Activated naive CD4-positive, alpha-beta T cell treated with anti-CD3 and anti-CD28 coated beads for 36 hours (primary cell): ENCODE measurements at regions of chr12 and their contacts with region 1.

Region 1: GRCh38 chr12:49644620-49644994 is 21.2 kb downstream of the PRPF40B start:
- DNase-seq: peak; percentile 90
- H3K4me3 Mint-ChIP-seq: no peak overlapping the region
- H3K27ac Mint-ChIP-seq: peak overlapping the region; percentile 71
- H3K4me1 Mint-ChIP-seq: peaks cover 29% of the 10 kb centered on the region
- H3K27me3 Mint-ChIP-seq: no peaks in the 10 kb centered on the region

Region 2: GRCh38 chr12:49655595-49656236 is 11.1 kb after region 1 on chr12:
- CTCF ChIA-PET with region 1: interaction called, 23 read pairs
- intact Hi-C with region 1: no loop called
- DNase-seq: no peak
- H3K4me3 Mint-ChIP-seq: no peak overlapping the region
- H3K27ac Mint-ChIP-seq: no peak overlapping the region
- H3K4me1 Mint-ChIP-seq: peaks cover 33% of the 10 kb centered on the region
- H3K27me3 Mint-ChIP-seq: no peaks in the 10 kb centered on the region